ENCODE measurements at regions of chr6 and their contacts with region 1.

Region 1: GRCh38 chr6:26122793-26123674 is 35.8 kb downstream of the HFE start:
- DNase-seq: peak; percentile 81
- H3K4me3 ChIP-seq: peak overlapping the region; percentile 37 to 93 (median 79)
- H3K27ac ChIP-seq: peak overlapping the region; percentile 94 to 98 (median 96)
- H3K4me1 ChIP-seq: peaks cover 11 to 37% (median 16%) of the 10 kb centered on the region in 3 donors
- H3K27me3 ChIP-seq: no peaks in the 10 kb centered on the region
- CTCF ChIP-seq: no peak
- POLR2A ChIP-seq: peak; percentile 29 to 95 (median 72)

Region 2: GRCh38 chr6:26156076-26156849 is 33.2 kb after region 1 on chr6:
- intact Hi-C with region 1: loop called (anchors 2 kb)
- DNase-seq: peak; percentile 75
- H3K4me3 ChIP-seq: peak overlapping the region; percentile 67 to 84 (median 72)
- H3K27ac ChIP-seq: peak overlapping the region; percentile 96 to 99 (median 97)
- H3K4me1 ChIP-seq: peaks cover 0 to 58% (median 12%) of the 10 kb centered on the region in 3 donors
- H3K27me3 ChIP-seq: no peaks in the 10 kb centered on the region
- CTCF ChIP-seq: peak in 2 of 6 experiments; percentile 10 to 25
- POLR2A ChIP-seq: peak; percentile 75 to 100 (median 93)

Region 3: DNA sequence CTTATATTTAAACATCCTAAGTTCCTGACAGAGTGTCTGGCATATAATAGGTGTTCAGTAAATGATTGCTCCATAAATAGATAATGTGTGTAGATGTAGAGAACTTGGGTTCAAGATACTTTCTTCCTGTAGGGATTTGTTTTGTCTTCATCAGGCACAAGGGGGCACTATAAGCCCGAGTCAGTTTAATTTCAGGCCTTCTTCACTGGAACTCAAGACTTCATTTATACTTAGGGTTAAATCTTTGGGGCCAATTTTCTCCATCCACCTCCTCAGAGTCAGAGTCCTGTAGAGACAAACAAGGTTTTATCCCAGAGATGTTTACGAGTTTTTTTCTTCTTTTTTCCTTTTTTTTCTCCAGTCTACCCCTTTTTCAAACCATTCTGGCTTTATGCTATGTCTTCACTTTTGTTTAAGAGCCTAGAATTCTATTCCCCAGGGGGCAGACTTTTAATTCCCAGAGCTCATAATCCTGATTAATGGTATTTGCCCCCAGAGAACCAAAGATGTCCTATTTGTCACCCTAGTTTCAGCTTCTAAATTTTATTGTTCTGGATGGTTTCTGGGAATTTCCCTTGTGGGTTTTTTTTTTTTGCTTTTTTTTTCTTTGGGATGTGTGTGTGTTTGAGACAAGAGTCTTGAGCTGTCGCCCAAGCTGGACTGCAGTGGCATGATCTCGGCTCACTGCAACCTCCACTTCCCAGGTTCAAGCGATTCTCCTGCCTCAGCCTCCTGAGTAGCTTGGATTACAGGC is 52.6 kb after region 1 on chr6:
- intact Hi-C with region 1: no loop called
- DNase-seq: no peak
- H3K4me3 ChIP-seq: no peak overlapping the region
- H3K27ac ChIP-seq: peak overlapping the region in 1 of 4 donors; percentile 45
- H3K4me1 ChIP-seq: peaks cover 0 to 21% (median 14%) of the 10 kb centered on the region in 3 donors
- H3K27me3 ChIP-seq: peaks cover 0 to 3% (median 0%) of the 10 kb centered on the region in 4 donors
- CTCF ChIP-seq: peak; percentile 46 to 77 (median 58)
- POLR2A ChIP-seq: no peak

Region 4: GRCh38 chr6:26196846-26197648 is 74.0 kb after region 1 on chr6:
- intact Hi-C with region 1: loop called (anchors 10 kb)
- DNase-seq: no peak
- H3K4me3 ChIP-seq: peak overlapping the region; percentile 44 to 73 (median 64)
- H3K27ac ChIP-seq: peak overlapping the region; percentile 94 to 98 (median 96)
- H3K4me1 ChIP-seq: peaks cover 5 to 51% (median 8%) of the 10 kb centered on the region in 3 donors
- H3K27me3 ChIP-seq: peaks cover 0 to 37% (median 0%) of the 10 kb centered on the region in 4 donors
- CTCF ChIP-seq: peak in 1 of 6 experiments; percentile 3
- POLR2A ChIP-seq: peak in 3 of 4 donors; percentile 88 to 96 (median 94)

Region 5: GRCh38 chr6:27132532-27133280 is 1009.7 kb after region 1 on chr6:
- intact Hi-C with region 1: loop called (anchors 10 kb)
- DNase-seq: peak; percentile 68
- H3K4me3 ChIP-seq: peak overlapping the region; percentile 45 to 71 (median 58)
- H3K27ac ChIP-seq: peak overlapping the region; percentile 91 to 98 (median 95)
- H3K4me1 ChIP-seq: peaks cover 0 to 39% (median 5%) of the 10 kb centered on the region in 3 donors
- H3K27me3 ChIP-seq: no peaks in the 10 kb centered on the region
- CTCF ChIP-seq: no peak
- POLR2A ChIP-seq: peak; percentile 7 to 99 (median 98)

Measured in esophagus squamous epithelium (tissue), 5 donors.